Panc1 (cell line): ENCODE measurements at regions of chr11 and their contacts with region 1.

Region 1: DNA sequence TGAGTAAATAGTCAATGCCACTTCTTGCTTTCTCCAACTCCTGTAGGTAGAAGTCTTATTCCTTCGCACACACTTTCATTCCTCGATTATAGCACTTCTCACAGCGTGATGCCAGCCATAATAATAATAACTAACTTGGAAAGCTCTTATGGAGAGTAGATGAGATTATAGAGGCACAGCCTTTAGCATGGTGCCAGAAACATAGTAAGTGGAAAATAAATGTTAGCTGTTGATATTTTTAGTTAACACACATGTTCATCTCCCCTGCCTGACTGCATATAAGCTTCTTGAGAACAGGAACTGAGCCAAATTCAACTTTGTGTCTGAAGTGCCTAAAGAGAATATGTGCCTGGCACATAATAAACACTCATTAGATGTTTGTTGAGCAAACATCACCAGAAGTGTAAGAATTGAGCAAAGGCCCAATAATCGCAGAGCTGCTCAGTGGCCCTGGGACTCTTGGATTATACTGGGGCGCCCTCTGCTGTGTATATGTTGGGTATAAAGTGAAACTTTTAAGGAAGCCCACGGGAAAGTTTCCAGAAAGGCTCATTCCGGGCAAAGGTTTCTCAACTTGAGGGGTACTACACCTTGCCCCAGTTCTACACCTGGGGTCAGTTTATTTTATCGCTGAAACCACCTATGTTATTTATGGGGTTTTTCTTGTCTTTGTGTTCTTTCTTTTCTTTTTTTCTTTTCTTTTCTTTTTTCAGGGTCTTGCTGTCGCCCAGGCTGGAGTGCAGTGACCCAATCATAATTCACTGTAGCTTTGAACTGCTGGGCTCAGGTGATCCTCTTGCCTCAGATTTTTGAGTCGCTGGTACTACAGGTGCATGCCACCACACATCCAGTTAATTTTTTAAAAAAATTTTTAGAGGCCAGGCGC is 22.3 kb downstream of the SLN start:
- DNase-seq: no peak
- ATAC-seq: peak; percentile 90
- H3K4me3 ChIP-seq: peak overlapping the region in 1 of 2 experiments; percentile 12; a peak in 1 of 4 replicates
- H3K27ac ChIP-seq: no peak overlapping the region
- H3K4me1 ChIP-seq: peaks cover 7% of the 10 kb centered on the region
- H3K27me3 ChIP-seq: no peaks in the 10 kb centered on the region
- CTCF ChIP-seq: peak; percentile 91

Region 2: DNA sequence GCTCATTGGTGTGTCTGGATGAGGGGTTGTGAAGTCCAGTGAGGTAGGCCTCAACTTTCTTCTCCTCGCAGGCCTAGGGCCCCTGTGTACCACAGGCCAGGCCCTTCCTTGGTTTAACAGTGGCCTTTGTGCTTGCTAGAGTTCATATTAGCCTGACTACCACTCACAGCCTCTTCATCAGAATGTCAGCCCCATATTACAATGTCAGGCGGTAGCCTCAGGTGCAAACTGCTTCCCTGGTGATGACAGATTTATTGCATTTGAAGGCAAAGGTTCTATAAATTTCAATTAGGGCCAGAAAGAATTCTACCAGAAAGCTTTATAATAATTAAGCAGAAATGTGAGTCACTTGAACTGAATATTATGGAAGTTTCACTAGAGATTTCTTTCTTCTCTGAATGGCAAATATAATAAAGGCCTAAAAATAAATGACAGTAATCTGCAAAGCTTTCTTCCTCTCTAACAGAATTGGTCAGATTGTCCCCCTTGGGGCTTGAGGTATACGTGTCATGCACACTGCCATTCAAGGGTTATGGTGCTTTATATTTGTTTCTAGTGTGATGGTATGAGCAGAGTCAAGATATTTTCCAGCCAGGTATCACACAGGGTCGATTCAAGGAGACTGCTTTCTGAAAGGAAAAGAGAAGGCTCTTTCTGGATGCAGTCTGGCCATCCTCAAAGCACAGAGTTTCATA is 442.2 kb before region 1 on chr11:
- CTCF ChIA-PET with region 1: no interaction called
- POLR2A ChIA-PET with region 1: no interaction called
- in situ Hi-C with region 1: no loop called
- intact Hi-C with region 1: no loop called
- DNase-seq: no peak
- ATAC-seq: no peak
- H3K4me3 ChIP-seq: no peak overlapping the region
- H3K27ac ChIP-seq: no peak overlapping the region
- H3K4me1 ChIP-seq: no peaks in the 10 kb centered on the region
- H3K27me3 ChIP-seq: no peaks in the 10 kb centered on the region
- CTCF ChIP-seq: no peak

Region 3: DNA sequence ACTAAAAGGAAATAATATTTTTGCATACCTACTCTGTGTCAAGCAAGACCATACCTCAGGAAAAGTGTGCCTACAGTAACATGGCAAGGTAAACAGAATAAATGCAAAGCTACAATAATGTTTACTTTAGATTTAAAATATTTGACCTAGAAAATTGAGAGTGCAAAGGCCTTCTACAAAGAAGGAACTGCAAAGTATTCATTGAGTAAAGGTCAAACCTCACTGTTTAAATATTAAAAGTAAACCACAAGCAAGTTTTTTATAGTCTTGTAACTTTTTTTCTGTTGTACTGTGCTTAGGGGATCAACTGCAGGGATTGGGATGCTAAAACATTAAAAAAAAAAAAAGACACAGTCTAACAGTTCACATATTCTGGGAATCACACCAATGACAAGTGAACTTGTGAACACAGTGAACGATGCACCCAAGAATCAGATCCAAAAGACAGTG is 280.8 kb before region 1 on chr11:
- CTCF ChIA-PET with region 1: no interaction called
- POLR2A ChIA-PET with region 1: no interaction called
- in situ Hi-C with region 1: no loop called
- intact Hi-C with region 1: no loop called
- DNase-seq: no peak
- ATAC-seq: no peak
- H3K4me3 ChIP-seq: no peak overlapping the region
- H3K27ac ChIP-seq: no peak overlapping the region
- H3K4me1 ChIP-seq: no peaks in the 10 kb centered on the region
- H3K27me3 ChIP-seq: no peaks in the 10 kb centered on the region
- CTCF ChIP-seq: no peak

Region 4: GRCh38 chr11:107549253-107549953 is 140.2 kb before region 1 on chr11:
- CTCF ChIA-PET with region 1: interaction called, 8 read pairs
- POLR2A ChIA-PET with region 1: no interaction called
- in situ Hi-C with region 1: loop called (anchors 10 kb)
- intact Hi-C with region 1: loop called (anchors 1 kb)
- DNase-seq: no peak
- ATAC-seq: peak; percentile 64; the same call in 1 of the 2 replicates
- H3K4me3 ChIP-seq: no peak overlapping the region
- H3K27ac ChIP-seq: no peak overlapping the region
- H3K4me1 ChIP-seq: peaks cover 10% of the 10 kb centered on the region; the same call in 1 of the 2 replicates
- H3K27me3 ChIP-seq: no peaks in the 10 kb centered on the region
- CTCF ChIP-seq: peak; percentile 90

Region 5: GRCh38 chr11:107563702-107564101 is 125.9 kb before region 1 on chr11:
- CTCF ChIA-PET with region 1: interaction called, 20 read pairs
- POLR2A ChIA-PET with region 1: no interaction called
- in situ Hi-C with region 1: loop called (anchors 10 kb)
- intact Hi-C with region 1: loop called (anchors 1 kb)
- DNase-seq: peak; percentile 67
- ATAC-seq: peak; percentile 3; the same call in 1 of the 2 replicates
- H3K4me3 ChIP-seq: peak overlapping the region in 1 of 2 experiments; percentile 16; a peak in 3 of 4 replicates
- H3K27ac ChIP-seq: peak overlapping the region; percentile 70
- H3K4me1 ChIP-seq: peaks cover 37% of the 10 kb centered on the region
- H3K27me3 ChIP-seq: no peaks in the 10 kb centered on the region
- CTCF ChIP-seq: peak; percentile 84

Region 6: DNA sequence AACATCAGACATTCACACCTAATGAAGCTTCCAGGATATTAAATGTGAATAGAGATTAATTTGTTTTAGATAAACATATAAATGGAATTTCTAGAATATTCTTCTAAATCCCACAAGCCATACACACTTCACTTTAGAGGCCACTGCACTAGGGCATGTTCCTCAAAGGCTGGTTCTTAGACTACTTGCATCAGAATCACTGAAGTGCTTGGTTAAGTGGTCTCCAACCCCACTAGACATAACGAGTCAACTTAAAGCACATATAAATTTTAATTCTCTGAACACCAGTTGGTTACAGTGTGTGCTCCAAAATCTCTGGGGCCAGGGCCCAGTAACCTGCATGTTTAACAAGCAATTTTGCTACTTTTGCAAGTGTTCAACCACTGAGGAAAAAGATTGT is 116.1 kb before region 1 on chr11:
- CTCF ChIA-PET with region 1: interaction called, 15 read pairs
- POLR2A ChIA-PET with region 1: no interaction called
- in situ Hi-C with region 1: no loop called
- intact Hi-C with region 1: loop called (anchors 1 kb)
- DNase-seq: no peak
- ATAC-seq: no peak
- H3K4me3 ChIP-seq: no peak overlapping the region
- H3K27ac ChIP-seq: no peak overlapping the region
- H3K4me1 ChIP-seq: no peaks in the 10 kb centered on the region
- H3K27me3 ChIP-seq: no peaks in the 10 kb centered on the region
- CTCF ChIP-seq: no peak

Region 7: GRCh38 chr11:107598225-107599139 is 91.1 kb before region 1 on chr11:
- CTCF ChIA-PET with region 1: interaction called, 3 read pairs
- POLR2A ChIA-PET with region 1: interaction called, 11 read pairs
- in situ Hi-C with region 1: no loop called
- intact Hi-C with region 1: no loop called
- DNase-seq: no peak
- ATAC-seq: peak; percentile 93
- H3K4me3 ChIP-seq: no peak overlapping the region
- H3K27ac ChIP-seq: no peak overlapping the region
- H3K4me1 ChIP-seq: no peaks in the 10 kb centered on the region
- H3K27me3 ChIP-seq: no peaks in the 10 kb centered on the region; the same call in 1 of the 2 replicates
- CTCF ChIP-seq: peak; percentile 79

Region 8: DNA sequence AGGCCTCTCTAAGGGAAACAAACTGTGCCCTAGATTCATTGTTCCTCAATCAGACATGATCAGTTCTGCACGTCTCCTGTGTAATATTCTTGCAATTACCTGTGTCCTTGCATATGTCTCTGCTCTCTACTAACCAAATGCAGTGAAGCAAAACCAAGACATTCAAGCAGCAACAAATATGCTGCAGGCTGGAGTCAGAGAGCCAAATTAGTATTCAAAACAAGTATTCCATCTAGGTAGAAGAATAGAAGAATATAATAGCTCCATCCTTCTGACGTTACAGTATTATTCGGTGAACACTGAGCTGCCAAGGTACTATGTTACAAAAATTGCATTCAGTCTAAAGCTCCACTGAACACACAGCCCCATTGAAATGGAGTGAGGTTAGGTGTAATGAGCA is 29.5 kb before region 1 on chr11:
- CTCF ChIA-PET with region 1: no interaction called
- POLR2A ChIA-PET with region 1: no interaction called
- in situ Hi-C with region 1: no loop called
- intact Hi-C with region 1: no loop called
- DNase-seq: no peak
- ATAC-seq: no peak
- H3K4me3 ChIP-seq: no peak overlapping the region
- H3K27ac ChIP-seq: no peak overlapping the region
- H3K4me1 ChIP-seq: no peaks in the 10 kb centered on the region
- H3K27me3 ChIP-seq: no peaks in the 10 kb centered on the region
- CTCF ChIP-seq: no peak

Region 9: DNA sequence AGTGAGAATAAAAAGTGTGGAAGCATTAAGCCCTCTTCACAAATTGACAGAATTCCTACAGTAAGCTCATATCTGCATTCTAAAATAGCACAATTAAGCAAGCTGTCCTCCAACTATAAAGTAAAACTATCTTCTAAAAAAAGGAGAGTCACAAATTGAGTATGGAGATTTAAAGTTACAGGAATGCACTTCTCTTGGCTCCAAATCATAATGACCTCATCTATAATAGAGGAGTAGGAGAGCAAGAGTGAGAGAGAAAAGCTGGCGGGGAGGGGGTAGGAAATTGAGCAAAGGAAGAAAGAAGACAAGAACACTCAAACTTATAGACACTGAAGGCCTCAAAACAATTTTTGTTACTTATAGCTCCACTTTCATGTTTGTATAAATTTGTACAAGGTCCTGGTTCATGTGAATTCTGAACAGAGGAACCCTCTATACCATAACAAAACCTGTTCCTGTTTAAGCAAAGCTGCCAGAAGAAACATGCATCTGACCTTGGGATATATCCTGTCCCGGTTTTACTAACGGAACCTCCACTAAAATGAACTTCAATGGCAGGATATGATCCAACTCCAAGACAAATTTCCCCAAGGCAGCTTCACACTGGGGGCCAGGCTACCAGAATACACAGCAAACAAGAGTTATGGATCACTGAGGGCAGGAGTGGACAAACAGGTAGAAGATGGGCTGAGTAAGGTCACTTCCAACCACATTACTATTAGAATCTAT is 131.8 kb after region 1 on chr11:
- CTCF ChIA-PET with region 1: no interaction called
- POLR2A ChIA-PET with region 1: no interaction called
- in situ Hi-C with region 1: no loop called
- intact Hi-C with region 1: no loop called
- DNase-seq: no peak
- ATAC-seq: no peak
- H3K4me3 ChIP-seq: no peak overlapping the region
- H3K27ac ChIP-seq: peak overlapping the region; percentile 29; the same call in 1 of the 2 replicates
- H3K4me1 ChIP-seq: peaks cover 38% of the 10 kb centered on the region
- H3K27me3 ChIP-seq: no peaks in the 10 kb centered on the region
- CTCF ChIP-seq: no peak